Posterior cingulate gyrus (tissue), 11 donors: ENCODE measurements at regions of chr1 and their contacts with region 1.

Region 1: GRCh38 chr1:23743287-23744052 is at the start of gene ELOA:
- DNase-seq: peak; percentile 58 to 97 (median 76)

Region 2: GRCh38 chr1:23691499-23692307 is 51.8 kb before region 1 on chr1 and contains the start of gene RPL11:
- intact Hi-C with region 1: loop called (anchors 2 kb)
- DNase-seq: peak; percentile 90 to 99 (median 94)

Region 3: GRCh38 chr1:23701996-23702395 is 41.5 kb before region 1 on chr1:
- intact Hi-C with region 1: no loop called
- DNase-seq: no peak

Region 4: DNA sequence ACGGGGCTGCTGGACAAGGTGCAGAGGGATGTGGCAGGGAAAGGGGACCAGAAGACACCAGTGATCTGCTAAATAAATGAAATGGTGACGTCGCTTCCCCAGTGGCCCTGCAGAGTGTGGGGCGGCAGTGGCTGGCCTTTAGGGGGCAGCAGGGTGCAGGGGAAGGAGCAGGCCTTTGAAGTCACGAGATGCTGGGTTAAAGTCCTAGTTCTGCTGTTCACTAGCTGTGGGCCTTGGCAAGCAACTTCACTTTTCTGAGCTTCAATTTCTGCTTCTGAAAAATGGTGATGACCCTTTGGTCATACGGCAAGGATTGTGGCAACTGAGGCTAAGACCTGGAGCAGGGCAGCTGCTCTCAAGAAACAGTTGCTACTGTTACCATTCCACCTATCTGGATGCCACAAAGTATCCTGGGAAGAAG is 66.3 kb after region 1 on chr1:
- intact Hi-C with region 1: no loop called
- DNase-seq: peak in 6 of 10 donors; percentile 59 to 94 (median 64)

Region 5: GRCh38 chr1:24036088-24036487 is 292.6 kb after region 1 on chr1:
- intact Hi-C with region 1: no loop called
- DNase-seq: no peak

Region 6: DNA sequence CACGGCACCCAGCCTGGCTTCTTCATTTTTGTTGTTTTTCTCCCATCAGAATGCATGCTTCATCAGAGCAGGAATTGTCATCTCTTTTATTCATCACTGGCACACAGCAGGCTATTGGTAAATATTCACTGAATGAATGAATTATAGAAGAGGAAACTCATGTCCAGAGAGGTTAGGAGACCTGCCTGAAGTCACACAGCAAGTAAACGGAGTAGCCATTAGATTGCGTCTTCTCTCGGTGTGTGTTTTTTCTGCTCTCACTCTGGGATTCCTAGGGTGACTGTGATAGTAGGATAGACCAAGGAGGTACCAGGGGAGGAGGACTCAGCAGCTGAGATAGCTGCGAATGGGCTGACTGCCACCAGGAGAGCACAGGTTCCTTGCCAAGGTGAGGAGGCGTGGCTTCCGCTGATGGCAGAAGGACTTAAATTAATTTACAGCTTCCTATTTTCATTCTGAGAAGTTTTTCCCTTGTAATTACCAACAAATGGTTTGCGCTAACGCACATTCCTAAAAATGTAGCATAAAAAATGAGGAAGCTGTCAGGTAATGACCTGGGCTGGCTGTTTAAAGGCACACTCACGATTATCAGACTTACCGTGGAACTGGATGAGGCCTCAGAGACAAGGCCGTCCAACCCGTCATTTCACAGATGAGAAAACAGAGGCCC is 808.0 kb after region 1 on chr1:
- intact Hi-C with region 1: no loop called
- DNase-seq: peak in 1 of 10 donors; percentile 30